Caco-2 (cell line): ENCODE measurements at regions of chr2 and their contacts with region 1.

Region 1: DNA sequence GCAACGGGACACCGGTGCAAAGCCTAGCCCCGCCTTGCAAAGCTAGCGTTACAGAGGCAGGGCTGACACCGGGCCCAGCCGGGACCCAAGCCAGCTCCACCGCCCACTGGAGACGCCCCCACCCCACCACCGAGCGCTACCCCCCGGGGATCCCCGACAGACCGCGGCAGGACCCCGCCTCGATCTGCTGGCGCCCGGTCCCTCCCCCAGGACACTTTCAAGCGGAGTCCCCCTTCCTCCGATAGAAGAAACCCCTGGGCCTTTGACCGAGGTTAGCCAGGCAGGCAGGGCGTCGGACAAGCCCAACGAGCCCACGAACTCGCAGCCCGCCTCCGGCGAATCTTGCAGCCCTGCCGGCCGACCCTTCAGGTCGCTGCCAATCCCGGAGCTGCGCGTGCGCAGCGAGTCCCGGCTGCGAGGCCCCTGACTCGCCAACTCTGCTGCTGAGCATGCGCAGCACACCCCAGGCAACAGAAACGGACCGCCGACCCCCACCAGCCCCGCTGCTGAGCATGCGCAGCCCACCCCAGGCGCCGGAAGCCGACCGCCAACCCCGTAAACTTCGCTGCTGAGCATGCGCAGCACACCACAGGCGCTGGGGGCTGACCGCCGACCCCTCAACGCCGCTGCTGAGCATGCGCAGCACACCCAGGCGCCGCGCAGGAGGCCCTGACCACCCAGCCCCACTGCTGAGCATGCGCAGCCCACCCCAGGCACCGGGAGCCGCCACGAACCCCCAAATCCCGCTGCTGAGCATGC is 656 bp downstream of the ADI1 start:
- DNase-seq: peak; percentile 99
- H3K4me3 ChIP-seq: peak overlapping the region; percentile 94
- H3K4me3 Mint-ChIP-seq: peak overlapping the region; percentile 81
- H3K27ac Mint-ChIP-seq: peak overlapping the region; percentile 68
- H3K4me1 ChIP-seq: peaks cover 28% of the 10 kb centered on the region
- H3K4me1 Mint-ChIP-seq: peaks cover 39% of the 10 kb centered on the region
- H3K27me3 ChIP-seq: no peaks in the 10 kb centered on the region
- H3K27me3 Mint-ChIP-seq: no peaks in the 10 kb centered on the region
- CTCF ChIP-seq: no peak

Region 2: GRCh38 chr2:3379647-3380534 is 138.8 kb before region 1 on chr2 and contains the start of gene TRAPPC12:
- CTCF ChIA-PET with region 1: no interaction called
- POLR2A ChIA-PET with region 1: no interaction called
- intact Hi-C with region 1: loop called (anchors 5 kb)
- DNase-seq: peak; percentile 95 to 97
- H3K4me3 ChIP-seq: peak within 1 kb of the TSS; percentile 91
- H3K4me3 Mint-ChIP-seq: peak within 1 kb of the TSS; percentile 99
- H3K27ac Mint-ChIP-seq: peak within 1 kb of the TSS; percentile 96
- H3K4me1 ChIP-seq: peaks cover 10% of the 10 kb centered on the region
- H3K4me1 Mint-ChIP-seq: peaks cover 6% of the 10 kb centered on the region
- H3K27me3 ChIP-seq: no peaks in the 10 kb centered on the region
- H3K27me3 Mint-ChIP-seq: no peaks in the 10 kb centered on the region
- CTCF ChIP-seq: peak in 1 of 2 experiments; percentile 79
- total RNA-seq, gene TRAPPC12: 84.2 and 85.0 TPM in 2 replicates

Region 3: DNA sequence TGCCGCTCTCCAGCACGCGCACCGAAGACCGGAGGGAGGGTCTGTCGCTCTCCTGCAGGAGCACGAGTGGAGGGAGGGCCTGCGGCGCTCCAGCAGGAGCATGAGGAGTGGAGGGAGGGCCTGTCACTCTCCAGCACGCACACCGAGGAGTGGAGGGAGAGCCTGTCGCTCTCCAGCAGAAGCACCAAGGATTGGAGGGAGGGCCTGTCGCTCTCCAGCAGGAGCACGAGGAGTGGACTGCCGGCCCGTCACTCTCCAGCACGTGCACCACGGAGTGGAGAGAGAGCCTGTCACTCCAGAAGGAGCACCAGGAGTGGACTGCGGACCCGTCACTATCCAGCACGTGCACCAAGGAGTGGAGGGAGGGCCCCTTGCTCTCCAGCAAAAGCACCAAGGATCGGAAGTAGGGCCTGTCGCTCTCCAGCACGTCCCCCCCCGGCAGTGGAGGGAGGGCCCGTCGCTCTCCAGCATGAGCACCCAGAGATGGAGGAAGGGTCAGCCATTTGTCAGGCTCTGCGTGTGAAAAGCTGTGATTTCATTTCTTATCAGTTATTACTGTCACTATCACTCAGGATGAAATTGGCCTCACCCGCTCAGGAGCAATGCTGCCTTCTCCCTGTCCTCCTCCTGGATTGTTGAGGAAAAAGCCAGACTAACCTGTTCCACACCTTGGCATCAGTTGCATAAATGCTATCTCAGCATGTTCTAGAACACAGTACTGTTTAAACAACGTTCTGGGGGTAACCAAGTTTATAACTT is 35.3 kb before region 1 on chr2:
- CTCF ChIA-PET with region 1: no interaction called
- POLR2A ChIA-PET with region 1: interaction called, 3 read pairs
- intact Hi-C with region 1: loop called (anchors 1 kb)
- DNase-seq: peak; percentile 98 to 99
- H3K4me3 ChIP-seq: peak overlapping the region; percentile 42
- H3K4me3 Mint-ChIP-seq: peak overlapping the region; percentile 77
- H3K27ac Mint-ChIP-seq: peak overlapping the region; percentile 93
- H3K4me1 ChIP-seq: peaks cover 12% of the 10 kb centered on the region
- H3K4me1 Mint-ChIP-seq: peaks cover 10% of the 10 kb centered on the region
- H3K27me3 ChIP-seq: no peaks in the 10 kb centered on the region
- H3K27me3 Mint-ChIP-seq: no peaks in the 10 kb centered on the region
- CTCF ChIP-seq: no peak

Region 4: DNA sequence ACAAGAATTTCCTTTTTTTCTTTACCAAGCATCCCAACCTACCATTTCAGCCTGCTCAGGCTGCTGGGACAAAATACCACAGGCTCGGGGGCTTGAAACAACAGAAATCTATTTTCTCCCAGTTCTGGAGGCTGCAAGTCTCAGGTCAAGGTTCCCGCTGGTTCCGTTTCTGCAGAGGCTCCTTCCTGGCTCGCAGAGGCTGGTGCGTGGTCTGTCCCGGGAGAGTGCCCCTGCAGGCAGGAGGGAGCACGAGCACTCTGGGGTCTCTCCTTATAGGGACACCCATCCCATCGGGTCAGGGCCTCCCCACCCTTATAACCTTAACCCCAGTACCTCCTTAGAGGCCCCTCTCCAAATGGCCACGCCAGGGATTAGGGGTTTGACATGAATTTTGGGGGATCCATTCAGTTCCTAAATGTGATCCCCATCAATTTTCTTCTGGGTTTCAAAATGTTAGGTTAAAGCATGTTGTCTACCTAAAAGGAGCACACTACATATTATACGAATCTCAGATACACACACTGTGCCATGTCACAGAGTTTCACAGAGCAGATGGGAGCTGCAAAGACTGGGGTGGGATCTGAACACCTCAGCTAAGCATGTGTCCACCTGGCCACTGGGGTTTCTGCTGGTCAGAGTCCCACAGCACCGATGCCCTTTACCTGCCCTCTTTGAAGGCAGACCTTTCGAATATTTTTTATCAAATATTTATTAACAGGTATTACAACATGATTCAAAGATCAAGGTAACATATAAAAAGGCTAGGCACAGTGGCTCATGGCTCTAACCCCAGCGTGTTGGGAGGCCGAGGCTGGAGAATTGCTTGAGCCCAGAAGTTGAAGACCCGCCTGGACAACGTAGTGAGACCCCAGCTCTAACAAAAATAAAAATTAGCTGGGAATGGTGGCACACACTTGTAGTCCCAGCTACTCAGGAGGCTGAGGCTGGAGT is 18.3 kb after region 1 on chr2:
- CTCF ChIA-PET with region 1: interaction called, 7 read pairs
- POLR2A ChIA-PET with region 1: interaction called, 13 read pairs
- intact Hi-C with region 1: loop called (anchors 1 kb)
- DNase-seq: peak; percentile 84 to 87
- H3K4me3 ChIP-seq: peak overlapping the region; percentile 54
- H3K4me3 Mint-ChIP-seq: peak overlapping the region; percentile 95
- H3K27ac Mint-ChIP-seq: peak overlapping the region; percentile 99
- H3K4me1 ChIP-seq: peaks cover 7% of the 10 kb centered on the region; the same call in 1 of the 2 replicates
- H3K4me1 Mint-ChIP-seq: peaks cover 7% of the 10 kb centered on the region
- H3K27me3 ChIP-seq: no peaks in the 10 kb centered on the region
- H3K27me3 Mint-ChIP-seq: no peaks in the 10 kb centered on the region
- CTCF ChIP-seq: peak; percentile 46 to 81

Region 5: GRCh38 chr2:3585261-3586109 is 66.8 kb after region 1 on chr2:
- CTCF ChIA-PET with region 1: no interaction called
- POLR2A ChIA-PET with region 1: no interaction called
- intact Hi-C with region 1: no loop called
- DNase-seq: peak in 1 of 2 experiments; percentile 30
- H3K4me3 ChIP-seq: no peak overlapping the region
- H3K4me3 Mint-ChIP-seq: no peak overlapping the region
- H3K27ac Mint-ChIP-seq: no peak overlapping the region
- H3K4me1 ChIP-seq: peaks cover 14% of the 10 kb centered on the region
- H3K4me1 Mint-ChIP-seq: no peaks in the 10 kb centered on the region
- H3K27me3 ChIP-seq: no peaks in the 10 kb centered on the region
- H3K27me3 Mint-ChIP-seq: no peaks in the 10 kb centered on the region
- CTCF ChIP-seq: no peak

Region 6: GRCh38 chr2:3644891-3645605 is 126.4 kb after region 1 on chr2:
- CTCF ChIA-PET with region 1: no interaction called
- POLR2A ChIA-PET with region 1: no interaction called
- intact Hi-C with region 1: loop called (anchors 1 kb)
- DNase-seq: no peak
- H3K4me3 ChIP-seq: no peak overlapping the region
- H3K4me3 Mint-ChIP-seq: no peak overlapping the region
- H3K27ac Mint-ChIP-seq: peak overlapping the region; percentile 62
- H3K4me1 ChIP-seq: peaks cover 18% of the 10 kb centered on the region
- H3K4me1 Mint-ChIP-seq: peaks cover 21% of the 10 kb centered on the region
- H3K27me3 ChIP-seq: no peaks in the 10 kb centered on the region
- H3K27me3 Mint-ChIP-seq: no peaks in the 10 kb centered on the region
- CTCF ChIP-seq: no peak